A549 (cell line): ENCODE measurements at regions of chr1 and their contacts with region 1.

Region 1: DNA sequence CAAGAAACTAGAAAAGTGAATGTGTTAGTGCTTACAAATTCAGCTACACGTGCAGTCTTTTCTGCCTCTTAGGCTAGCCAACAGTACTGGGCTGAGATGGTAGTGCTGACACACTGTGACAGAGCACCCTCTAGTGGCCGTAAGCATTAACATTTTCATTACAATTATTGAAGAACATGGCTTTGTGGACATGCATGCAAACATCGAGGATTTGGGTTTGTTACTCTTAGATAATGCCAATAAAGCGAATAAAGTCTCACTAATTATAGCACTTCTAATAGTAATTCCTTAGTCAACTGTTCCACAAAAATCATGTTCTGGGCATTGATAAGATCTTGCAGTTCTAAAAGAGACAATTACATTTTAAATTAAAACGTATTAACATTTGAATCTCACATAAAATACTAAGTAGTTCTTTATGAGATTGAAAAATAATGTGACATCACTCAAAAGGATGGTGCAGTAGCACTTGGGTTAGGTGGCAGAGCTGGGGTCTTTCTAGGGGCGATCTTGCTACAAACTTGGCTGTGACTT is 47.1 kb downstream of the MYSM1 start:
- DNase-seq: peak; percentile 55 to 68
- ATAC-seq: peak; percentile 86 to 95
- H3K4me3 ChIP-seq: no peak overlapping the region
- H3K27ac ChIP-seq: no peak overlapping the region
- H3K4me1 ChIP-seq: no peaks in the 10 kb centered on the region
- CTCF ChIP-seq: peak; percentile 77
- EP300 ChIP-seq: no peak
- POLR2A ChIP-seq: no peak
- RAD21 ChIP-seq: peak; percentile 79

Region 2: GRCh38 chr1:58515794-58516401 is 136.8 kb before region 1 on chr1:
- CTCF ChIA-PET with region 1: interaction called, 45 read pairs
- POLR2A ChIA-PET with region 1: no interaction called
- DNase-seq: peak; percentile 14 to 70
- ATAC-seq: peak in 1 of 2 experiments; percentile 65; a peak in 3 of 6 replicates
- H3K4me3 ChIP-seq: no peak overlapping the region
- H3K27ac ChIP-seq: no peak overlapping the region
- H3K4me1 ChIP-seq: no peaks in the 10 kb centered on the region
- CTCF ChIP-seq: peak; percentile 63
- EP300 ChIP-seq: no peak
- POLR2A ChIP-seq: no peak
- RAD21 ChIP-seq: peak; percentile 78 to 81

Region 3: GRCh38 chr1:58528518-58528917 is 124.2 kb before region 1 on chr1:
- CTCF ChIA-PET with region 1: interaction called, 15 read pairs
- POLR2A ChIA-PET with region 1: no interaction called
- DNase-seq: no peak
- ATAC-seq: no peak
- H3K4me3 ChIP-seq: no peak overlapping the region
- H3K27ac ChIP-seq: no peak overlapping the region
- H3K4me1 ChIP-seq: no peaks in the 10 kb centered on the region
- CTCF ChIP-seq: no peak
- EP300 ChIP-seq: no peak
- POLR2A ChIP-seq: no peak
- RAD21 ChIP-seq: no peak

Region 4: DNA sequence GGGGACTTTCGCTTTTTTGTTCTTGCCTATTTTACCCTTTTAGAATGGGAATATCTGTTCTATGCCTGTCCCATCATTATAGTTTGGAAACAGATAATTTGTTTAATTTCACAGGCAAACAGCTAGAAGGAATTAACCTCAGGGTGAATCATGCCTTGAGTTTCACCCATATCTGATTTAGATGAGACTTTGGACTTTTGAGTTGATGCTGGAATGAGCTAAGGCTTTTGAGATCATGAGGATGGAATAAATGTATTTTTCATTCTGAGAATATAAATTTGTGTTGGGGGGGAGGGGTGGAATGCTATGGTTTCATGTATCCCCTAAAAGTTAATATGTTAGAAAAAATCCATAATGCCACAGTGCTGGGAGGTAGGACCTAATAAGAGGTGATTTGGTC is 19.6 kb before region 1 on chr1:
- CTCF ChIA-PET with region 1: interaction called, 10 read pairs
- POLR2A ChIA-PET with region 1: no interaction called
- DNase-seq: no peak
- ATAC-seq: no peak
- H3K4me3 ChIP-seq: no peak overlapping the region
- H3K27ac ChIP-seq: no peak overlapping the region
- H3K4me1 ChIP-seq: no peaks in the 10 kb centered on the region
- CTCF ChIP-seq: no peak
- EP300 ChIP-seq: no peak
- POLR2A ChIP-seq: no peak
- RAD21 ChIP-seq: no peak

Region 5: GRCh38 chr1:58664881-58665280 is 12.2 kb after region 1 on chr1:
- CTCF ChIA-PET with region 1: interaction called, 10 read pairs
- POLR2A ChIA-PET with region 1: no interaction called
- DNase-seq: no peak
- ATAC-seq: no peak
- H3K4me3 ChIP-seq: no peak overlapping the region
- H3K27ac ChIP-seq: no peak overlapping the region
- H3K4me1 ChIP-seq: peaks cover 10% of the 10 kb centered on the region
- CTCF ChIP-seq: no peak
- EP300 ChIP-seq: no peak
- POLR2A ChIP-seq: no peak
- RAD21 ChIP-seq: no peak

Region 6: GRCh38 chr1:58739856-58740466 is 87.2 kb after region 1 on chr1:
- CTCF ChIA-PET with region 1: no interaction called
- POLR2A ChIA-PET with region 1: no interaction called
- DNase-seq: peak; percentile 23 to 35
- ATAC-seq: peak in 1 of 2 experiments; percentile 75; a peak in 4 of 6 replicates
- H3K4me3 ChIP-seq: no peak overlapping the region
- H3K27ac ChIP-seq: no peak overlapping the region
- H3K4me1 ChIP-seq: no peaks in the 10 kb centered on the region
- CTCF ChIP-seq: peak; percentile 83
- EP300 ChIP-seq: no peak
- POLR2A ChIP-seq: no peak
- RAD21 ChIP-seq: peak; percentile 91 to 94